ENCODE measurements at regions of chr1 and their contacts with region 1.

Region 1: DNA sequence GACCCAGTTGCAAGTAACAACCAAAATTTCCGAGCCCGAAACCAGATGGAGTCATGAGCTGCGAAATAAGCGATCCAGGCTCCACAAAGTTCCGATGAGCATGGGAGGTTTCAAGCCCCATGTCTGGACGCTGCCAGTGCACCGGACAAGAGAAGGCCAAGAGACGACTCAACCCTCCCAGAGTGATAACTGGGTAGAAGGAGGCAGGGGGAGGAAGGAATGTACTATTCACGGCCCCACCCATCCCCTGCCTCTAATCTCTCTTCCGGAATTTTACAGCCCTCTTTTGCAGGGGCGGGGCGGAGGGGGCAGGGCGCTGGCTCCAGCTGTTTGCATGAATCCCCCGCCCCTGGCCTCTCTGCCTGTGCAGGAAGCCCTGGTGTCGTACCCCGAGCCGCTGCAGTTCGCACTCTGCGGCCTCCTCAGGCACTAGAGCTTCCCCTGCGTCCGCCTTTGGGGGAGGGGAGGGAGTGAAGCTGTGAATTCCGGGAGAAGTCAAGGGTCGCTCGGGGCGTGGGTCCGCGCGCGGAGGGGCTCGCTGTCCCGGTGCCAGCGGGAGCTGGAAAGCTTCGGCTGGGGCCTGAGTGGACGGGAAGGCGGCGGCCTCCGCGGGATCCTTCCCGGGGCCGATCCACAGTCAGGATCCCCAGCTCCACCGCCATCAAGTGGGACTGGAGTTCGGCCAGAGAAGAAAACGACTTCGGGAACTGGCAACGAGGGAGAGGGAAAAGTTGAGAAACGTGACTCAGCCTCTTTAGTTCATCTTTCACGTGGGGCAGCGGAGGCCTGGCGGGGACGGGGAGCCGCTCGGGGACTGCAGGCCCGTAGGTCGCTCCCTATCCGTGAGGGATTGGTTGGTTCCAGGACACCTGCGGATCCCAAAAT is 6.3 kb upstream of the PTP4A2 start:
- DNase-seq: no peak
- H3K4me3 Mint-ChIP-seq: no peak overlapping the region
- H3K27ac Mint-ChIP-seq: no peak overlapping the region
- H3K4me1 Mint-ChIP-seq: peaks cover 10% of the 10 kb centered on the region
- H3K27me3 Mint-ChIP-seq: no peaks in the 10 kb centered on the region
- CTCF ChIP-seq: no peak

Region 2: DNA sequence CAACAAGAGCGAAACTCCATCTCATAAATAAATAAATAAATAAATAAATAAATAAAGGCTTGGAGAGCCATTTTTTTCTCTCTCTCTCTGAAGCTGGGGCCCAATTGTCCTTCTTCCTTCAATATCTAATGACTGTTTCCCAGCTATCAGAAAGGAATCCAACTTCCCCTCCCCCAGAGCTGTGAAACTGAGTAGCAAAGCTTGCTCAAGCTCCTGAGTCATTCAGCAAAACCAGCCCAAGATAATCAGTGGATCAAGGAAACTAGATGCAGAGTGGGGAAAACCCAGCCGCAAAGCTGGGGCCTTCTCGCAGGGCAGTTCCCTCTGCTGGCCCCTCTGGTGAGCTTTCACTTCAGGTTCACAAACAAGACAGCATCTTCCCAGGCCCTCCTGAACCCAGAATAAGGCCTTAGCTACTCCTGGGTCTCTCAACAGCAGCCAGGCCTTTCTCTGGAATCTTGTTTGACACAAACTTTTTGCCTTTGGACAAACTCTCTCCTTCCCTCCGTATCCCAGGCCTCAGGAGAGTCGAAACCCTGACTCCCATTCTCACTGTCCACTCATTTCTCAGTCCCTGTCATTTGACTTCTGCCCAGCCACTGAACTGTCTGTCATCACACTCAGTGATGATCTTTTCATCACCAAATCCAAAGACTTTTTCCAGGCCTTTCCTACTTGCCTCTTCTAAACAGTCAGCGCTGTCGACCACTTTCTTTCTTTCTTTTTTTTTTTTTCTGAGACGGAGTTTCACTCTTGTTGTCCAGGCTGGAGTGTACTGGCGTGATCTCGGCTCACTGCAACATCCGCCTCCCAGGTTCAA is 11.7 kb after region 1 on chr1:
- CTCF ChIA-PET with region 1: interaction called, 120 read pairs
- POLR2A ChIA-PET with region 1: interaction called, 409 read pairs
- intact Hi-C with region 1: loop called (anchors 2 kb)
- DNase-seq: peak; percentile 99
- H3K4me3 Mint-ChIP-seq: peak overlapping the region; percentile 39
- H3K27ac Mint-ChIP-seq: peak overlapping the region; percentile 100
- H3K4me1 Mint-ChIP-seq: peaks cover 35% of the 10 kb centered on the region
- H3K27me3 Mint-ChIP-seq: no peaks in the 10 kb centered on the region
- CTCF ChIP-seq: no peak

Measured in MCF 10A (cell line).